ENCODE measurements at regions of chr10 and their contacts with region 1.

Region 1: GRCh38 chr10:69914398-69915214 is 112.9 kb downstream of the COL13A1 start:
- DNase-seq: peak; percentile 65
- ATAC-seq: peak; percentile 99
- H3K4me3 ChIP-seq: no peak overlapping the region
- H3K27ac ChIP-seq: no peak overlapping the region
- H3K4me1 ChIP-seq: no peaks in the 10 kb centered on the region; the same call in 1 of the 2 replicates
- H3K27me3 ChIP-seq: no peaks in the 10 kb centered on the region
- CTCF ChIP-seq: peak; percentile 92
- POLR2A ChIP-seq: no peak
- RAD21 ChIP-seq: peak; percentile 92

Region 2: GRCh38 chr10:69515699-69516259 is 398.8 kb before region 1 on chr10:
- CTCF ChIA-PET with region 1: no interaction called
- POLR2A ChIA-PET with region 1: no interaction called
- dilution Hi-C with region 1: no loop called
- in situ Hi-C with region 1: loop called (anchors 25 kb)
- intact Hi-C with region 1: loop called (anchors 10 kb)
- DNase-seq: peak; percentile 55
- ATAC-seq: peak; percentile 99
- H3K4me3 ChIP-seq: no peak overlapping the region
- H3K27ac ChIP-seq: no peak overlapping the region
- H3K4me1 ChIP-seq: no peaks in the 10 kb centered on the region
- H3K27me3 ChIP-seq: peaks cover 24% of the 10 kb centered on the region
- CTCF ChIP-seq: peak; percentile 83
- POLR2A ChIP-seq: no peak
- RAD21 ChIP-seq: peak; percentile 89

Region 3: DNA sequence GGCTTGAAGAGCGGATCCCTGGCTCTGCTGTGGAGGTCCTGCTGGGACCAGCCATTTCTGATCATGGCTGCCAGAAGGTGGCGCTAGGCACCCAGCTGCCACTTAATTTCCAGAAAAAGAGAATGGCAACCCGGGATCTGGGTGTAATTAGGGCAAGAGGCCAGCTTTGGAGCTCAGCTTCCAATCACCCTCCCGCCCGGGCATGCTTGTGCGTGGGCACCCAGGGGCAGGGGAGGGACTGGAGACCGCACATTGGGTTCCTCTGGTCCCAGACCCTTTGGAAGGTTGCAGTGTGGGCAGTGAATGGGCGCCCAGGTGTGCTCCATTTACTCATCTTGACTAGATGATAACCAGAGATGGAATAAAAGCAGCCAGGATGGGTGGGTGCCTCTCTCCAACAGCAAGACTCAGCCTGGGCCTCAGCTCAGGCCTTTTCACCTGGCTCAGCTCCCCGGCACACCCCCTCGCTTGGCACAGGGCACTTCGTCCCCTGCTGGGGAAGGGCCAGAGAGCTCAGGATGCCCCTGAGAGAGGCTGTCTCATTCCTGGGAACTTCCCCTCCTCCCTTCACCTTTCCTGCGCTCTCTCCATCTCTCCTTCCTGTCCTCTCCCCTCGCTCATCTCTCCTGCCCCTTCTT is 269.8 kb before region 1 on chr10:
- CTCF ChIA-PET with region 1: interaction called, 6 read pairs
- POLR2A ChIA-PET with region 1: no interaction called
- dilution Hi-C with region 1: no loop called
- in situ Hi-C with region 1: loop called (anchors 5 kb)
- intact Hi-C with region 1: loop called (anchors 1 kb)
- DNase-seq: peak; percentile 41
- ATAC-seq: peak; percentile 86
- H3K4me3 ChIP-seq: no peak overlapping the region
- H3K27ac ChIP-seq: no peak overlapping the region
- H3K4me1 ChIP-seq: no peaks in the 10 kb centered on the region; the same call in 1 of the 2 replicates
- H3K27me3 ChIP-seq: peaks cover 57% of the 10 kb centered on the region
- CTCF ChIP-seq: peak; percentile 91
- POLR2A ChIP-seq: no peak
- RAD21 ChIP-seq: peak; percentile 94

Region 4: GRCh38 chr10:69731184-69731583 is 183.4 kb before region 1 on chr10:
- CTCF ChIA-PET with region 1: interaction called, 4 read pairs
- POLR2A ChIA-PET with region 1: no interaction called
- dilution Hi-C with region 1: no loop called
- in situ Hi-C with region 1: no loop called
- intact Hi-C with region 1: loop called (anchors 5 kb)
- DNase-seq: peak; percentile 91
- ATAC-seq: peak; percentile 75
- H3K4me3 ChIP-seq: no peak overlapping the region
- H3K27ac ChIP-seq: peak overlapping the region; percentile 69
- H3K4me1 ChIP-seq: peaks cover 56% of the 10 kb centered on the region
- H3K27me3 ChIP-seq: no peaks in the 10 kb centered on the region
- CTCF ChIP-seq: peak; percentile 29
- POLR2A ChIP-seq: no peak
- RAD21 ChIP-seq: peak; percentile 31; the same call in 1 of the 2 replicates

Region 5: GRCh38 chr10:69866688-69867461 is 47.7 kb before region 1 on chr10:
- CTCF ChIA-PET with region 1: interaction called, 3 read pairs
- POLR2A ChIA-PET with region 1: no interaction called
- dilution Hi-C with region 1: no loop called
- in situ Hi-C with region 1: no loop called
- intact Hi-C with region 1: loop called (anchors 5 kb)
- DNase-seq: peak; percentile 84
- ATAC-seq: peak; percentile 84
- H3K4me3 ChIP-seq: peak overlapping the region; percentile 13; the same call in 1 of the 2 replicates
- H3K27ac ChIP-seq: peak overlapping the region; percentile 70
- H3K4me1 ChIP-seq: peaks cover 33% of the 10 kb centered on the region
- H3K27me3 ChIP-seq: no peaks in the 10 kb centered on the region
- CTCF ChIP-seq: no peak
- POLR2A ChIP-seq: no peak
- RAD21 ChIP-seq: 0 out of 2 replicates have a peak, but pooled peaks have one; percentile 10